ENCODE measurements at regions of chr3 and their contacts with region 1.

Region 1: DNA sequence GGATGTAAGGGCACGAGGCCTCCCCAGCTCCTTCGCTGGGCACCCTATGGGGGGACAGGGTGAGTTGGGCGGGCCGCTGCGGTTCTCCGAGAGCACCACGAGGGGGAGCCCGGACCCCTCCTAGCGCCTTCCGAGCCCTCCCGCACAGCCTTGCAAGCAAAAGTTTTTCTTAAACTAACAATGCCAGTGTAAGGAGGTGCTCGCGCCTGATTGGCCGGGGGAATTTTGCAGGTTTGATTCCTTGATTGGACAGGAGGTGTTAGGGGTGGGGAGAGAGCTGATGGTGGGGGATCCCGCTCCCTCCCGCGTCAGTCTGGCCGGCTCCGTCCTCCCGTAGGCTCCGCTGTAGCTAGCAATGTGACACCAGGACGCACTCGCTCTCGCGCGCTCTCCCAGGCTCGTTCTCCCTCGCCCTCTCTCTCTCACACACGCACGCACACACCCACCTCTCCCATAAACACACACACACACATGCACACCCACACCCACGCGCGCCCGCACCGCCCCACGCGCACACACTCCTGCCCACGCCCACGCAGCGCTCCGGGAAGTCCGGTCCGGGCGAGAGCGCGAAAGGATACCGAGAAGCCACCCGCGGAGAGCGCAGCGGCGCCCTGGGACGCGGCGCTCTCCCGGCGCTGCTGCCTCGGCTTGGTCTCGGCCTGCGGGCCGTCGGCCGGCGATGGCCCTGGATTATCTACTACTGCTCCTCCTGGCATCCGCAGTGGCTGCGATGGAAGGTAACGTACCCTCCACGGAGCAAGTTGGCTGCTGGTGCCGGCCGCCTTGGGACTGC is at the start of gene EPHB1:
- DNase-seq: peak; percentile 92 to 95
- H3K4me3 ChIP-seq: peak within 1 kb of the TSS; percentile 38
- H3K4me1 ChIP-seq: no peaks in the 10 kb centered on the region
- H3K27me3 ChIP-seq: peaks cover 39% of the 10 kb centered on the region

Region 2: GRCh38 chr3:134607054-134608022 is 187.8 kb before region 1 on chr3:
- in situ Hi-C with region 1: no loop called
- DNase-seq: no peak
- H3K4me3 ChIP-seq: no peak overlapping the region
- H3K4me1 ChIP-seq: no peaks in the 10 kb centered on the region
- H3K27me3 ChIP-seq: no peaks in the 10 kb centered on the region

Region 3: DNA sequence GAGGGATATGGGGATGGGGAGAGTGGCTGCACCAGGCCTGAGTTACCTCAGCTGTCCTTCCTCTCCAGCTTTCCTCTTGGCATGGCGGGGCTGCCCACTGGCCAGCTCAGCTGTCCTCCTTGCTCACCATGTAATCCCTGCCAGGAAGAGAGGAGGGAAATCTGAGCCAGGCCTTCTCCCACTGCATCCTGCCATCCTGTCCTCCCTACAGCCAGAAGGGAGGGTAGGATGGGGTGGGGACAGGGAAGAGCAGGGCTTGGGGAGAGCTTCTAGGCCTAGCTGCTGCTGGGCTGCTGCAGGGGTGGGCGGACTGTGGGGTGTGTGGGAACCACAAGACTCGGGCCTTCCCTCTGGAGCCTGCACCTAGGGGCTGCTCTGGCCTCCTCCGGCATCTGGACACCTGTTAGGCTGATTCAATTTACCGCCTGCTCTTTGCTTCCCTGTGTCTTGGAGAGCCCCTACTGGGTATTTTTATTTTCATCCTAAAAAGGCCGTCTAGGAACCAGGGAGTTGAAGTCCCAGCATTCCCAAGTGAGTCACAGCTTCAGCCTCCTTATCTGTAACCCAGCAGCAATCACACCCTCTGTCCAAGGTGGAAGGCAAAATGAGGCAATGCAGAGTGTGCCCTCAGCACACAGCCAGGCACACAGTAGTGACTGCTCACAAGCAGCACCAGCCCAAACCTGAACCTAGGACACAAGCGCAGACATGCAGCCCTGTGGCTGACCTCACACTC is 131.3 kb before region 1 on chr3:
- in situ Hi-C with region 1: no loop called
- DNase-seq: no peak
- H3K4me3 ChIP-seq: no peak overlapping the region
- H3K4me1 ChIP-seq: no peaks in the 10 kb centered on the region
- H3K27me3 ChIP-seq: no peaks in the 10 kb centered on the region

Region 4: GRCh38 chr3:135513106-135514059 is 718.2 kb after region 1 on chr3:
- in situ Hi-C with region 1: loop called (anchors 10 kb)
- DNase-seq: no peak
- H3K4me3 ChIP-seq: no peak overlapping the region
- H3K4me1 ChIP-seq: no peaks in the 10 kb centered on the region
- H3K27me3 ChIP-seq: no peaks in the 10 kb centered on the region

Region 5: GRCh38 chr3:135918580-135918962 is 1123.4 kb after region 1 on chr3:
- in situ Hi-C with region 1: loop called (anchors 25 kb)
- DNase-seq: peak in 1 of 2 experiments; percentile 29
- H3K4me3 ChIP-seq: no peak overlapping the region
- H3K4me1 ChIP-seq: no peaks in the 10 kb centered on the region
- H3K27me3 ChIP-seq: peaks cover 2% of the 10 kb centered on the region; the same call in 1 of the 2 replicates

Region 6: DNA sequence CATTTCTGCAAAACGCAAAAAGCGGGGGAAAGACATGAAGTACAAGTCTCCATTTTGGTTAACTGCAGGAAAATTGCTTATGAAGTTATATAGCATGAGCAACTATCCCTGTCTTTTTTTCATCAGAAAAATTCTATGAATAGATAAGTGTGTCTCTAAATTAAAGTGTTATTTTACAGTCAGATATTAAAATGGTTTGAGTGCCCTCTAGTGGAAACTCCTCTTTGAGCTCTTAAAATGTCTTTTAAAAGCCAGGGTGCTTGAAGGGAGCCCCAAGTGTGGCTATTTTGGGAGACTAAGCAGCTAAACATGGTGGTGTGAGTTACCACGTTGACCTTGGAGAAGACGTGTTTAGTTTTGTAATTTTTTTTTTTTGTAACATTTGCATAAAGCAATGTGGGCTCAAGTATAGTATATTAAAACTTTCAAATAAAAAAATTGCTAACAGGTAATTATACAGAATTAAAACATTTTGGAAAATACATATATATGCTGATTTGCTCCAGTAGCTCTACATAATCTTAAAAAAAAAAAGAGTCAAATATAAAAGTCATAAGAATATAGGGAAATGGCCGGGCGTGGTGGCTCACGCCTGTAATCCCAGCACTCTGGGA is 1247.6 kb after region 1 on chr3:
- in situ Hi-C with region 1: loop called (anchors 25 kb)
- DNase-seq: peak; percentile 15 to 56
- H3K4me3 ChIP-seq: no peak overlapping the region
- H3K4me1 ChIP-seq: no peaks in the 10 kb centered on the region
- H3K27me3 ChIP-seq: no peaks in the 10 kb centered on the region